B cell (primary cell): ENCODE measurements at regions of chr16 and their contacts with region 1.

Region 1: DNA sequence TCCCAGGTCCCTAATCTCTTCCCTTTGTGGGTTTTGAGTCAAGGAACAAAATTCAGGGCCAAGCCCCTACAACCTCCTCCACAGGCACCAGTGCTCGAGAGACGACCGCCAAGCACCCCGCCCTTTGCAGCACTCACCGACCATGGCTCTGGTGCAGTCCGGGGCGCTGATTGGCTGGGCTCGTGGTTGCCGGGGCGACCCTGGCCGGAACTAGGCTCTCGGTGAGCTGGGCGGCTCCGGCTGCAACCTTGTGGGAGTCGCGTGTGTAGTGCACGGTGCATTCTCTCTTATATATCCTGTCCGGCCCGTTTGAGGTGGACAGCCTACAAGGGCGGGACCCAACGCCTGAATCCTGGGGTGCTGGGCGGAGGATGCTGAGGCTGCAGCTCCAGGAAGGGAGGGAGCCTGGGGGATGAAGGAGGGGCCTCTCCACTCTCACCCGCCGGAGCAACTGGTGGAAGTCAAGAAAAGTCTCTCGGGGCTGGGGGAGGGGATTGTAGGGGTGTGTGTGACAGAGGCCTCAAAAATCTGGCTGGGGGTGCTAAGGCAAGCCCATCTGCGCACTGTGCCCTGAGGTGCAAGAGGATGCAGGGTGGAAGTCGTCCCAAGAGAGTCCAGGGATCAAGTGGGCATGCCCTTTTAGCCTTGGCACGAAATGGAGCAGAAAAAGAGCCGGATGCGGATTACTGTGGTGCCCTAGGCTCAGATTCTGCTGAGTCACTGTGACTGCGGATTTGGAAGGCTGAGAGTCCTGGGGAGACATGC is at the start of gene NQO1:
- DNase-seq: peak; percentile 86
- ATAC-seq: peak; percentile 99
- H3K4me3 ChIP-seq: peak within 1 kb of the TSS; percentile 59 to 68 (median 60)
- H3K4me3 Mint-ChIP-seq: peak within 1 kb of the TSS; percentile 99
- H3K27ac ChIP-seq: peak within 1 kb of the TSS; percentile 47 to 66
- H3K27ac Mint-ChIP-seq: peak within 1 kb of the TSS; percentile 96
- H3K4me1 ChIP-seq: peaks cover 11 to 15% of the 10 kb centered on the region in 2 donors
- H3K4me1 Mint-ChIP-seq: peaks cover 17% of the 10 kb centered on the region
- H3K27me3 ChIP-seq: no peaks in the 10 kb centered on the region
- H3K27me3 Mint-ChIP-seq: no peaks in the 10 kb centered on the region
- CTCF ChIP-seq: no peak
- total RNA-seq, gene NQO1: 1.1 and 2.3 TPM in 2 replicates

Region 2: DNA sequence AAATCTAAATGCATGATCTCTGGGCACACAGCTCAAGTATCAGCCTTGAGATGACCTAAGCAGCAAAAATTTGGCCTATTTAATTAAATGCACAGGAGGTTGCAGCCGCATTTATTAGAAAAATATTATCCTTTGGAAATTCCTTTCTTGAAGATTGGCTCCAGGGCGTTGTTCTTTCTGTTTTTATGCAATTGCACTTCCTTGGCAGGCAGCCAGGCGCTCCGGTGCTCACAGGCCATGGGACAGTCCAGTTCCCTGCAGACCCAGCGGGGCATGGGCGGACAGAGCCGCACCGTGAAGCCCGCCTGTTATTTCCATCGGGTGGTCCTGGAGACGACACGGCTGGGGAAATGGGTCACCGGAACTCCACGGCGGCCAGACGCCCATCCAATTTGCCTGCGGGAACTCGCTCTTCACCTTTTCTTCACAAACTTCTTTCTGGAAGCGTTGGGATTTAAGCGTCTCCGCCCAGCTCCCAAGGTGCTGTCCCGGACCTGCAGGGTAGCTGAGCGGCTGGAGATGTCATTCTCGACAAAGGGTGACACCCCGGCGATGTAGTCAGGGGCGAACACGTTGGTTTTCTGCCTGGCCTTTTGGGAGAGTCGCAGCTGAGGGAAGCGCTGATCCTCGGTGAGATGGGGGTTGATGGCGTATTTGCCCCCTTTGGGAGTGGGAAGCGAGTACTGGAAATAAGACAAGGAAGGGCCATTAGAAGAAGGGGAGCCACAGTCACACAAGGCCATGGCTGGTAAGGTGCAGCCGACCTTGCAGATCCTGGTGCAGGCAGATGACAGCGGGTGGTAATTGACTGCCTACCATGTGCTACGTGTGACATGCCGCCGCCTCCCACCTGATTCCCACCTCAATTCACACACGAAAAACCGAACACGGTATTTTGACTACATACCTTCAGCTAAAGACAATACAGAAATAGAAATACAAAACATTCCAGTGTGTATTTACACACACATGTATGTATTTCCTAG is 15.7 kb after region 1 on chr16:
- CTCF ChIA-PET with region 1: no interaction called
- POLR2A ChIA-PET with region 1: no interaction called
- intact Hi-C with region 1: no loop called
- DNase-seq: no peak
- ATAC-seq: no peak
- H3K4me3 ChIP-seq: no peak overlapping the region
- H3K4me3 Mint-ChIP-seq: no peak overlapping the region
- H3K27ac ChIP-seq: no peak overlapping the region
- H3K27ac Mint-ChIP-seq: no peak overlapping the region
- H3K4me1 ChIP-seq: no peaks in the 10 kb centered on the region
- H3K4me1 Mint-ChIP-seq: no peaks in the 10 kb centered on the region
- H3K27me3 ChIP-seq: no peaks in the 10 kb centered on the region
- H3K27me3 Mint-ChIP-seq: no peaks in the 10 kb centered on the region
- CTCF ChIP-seq: no peak

Region 3: DNA sequence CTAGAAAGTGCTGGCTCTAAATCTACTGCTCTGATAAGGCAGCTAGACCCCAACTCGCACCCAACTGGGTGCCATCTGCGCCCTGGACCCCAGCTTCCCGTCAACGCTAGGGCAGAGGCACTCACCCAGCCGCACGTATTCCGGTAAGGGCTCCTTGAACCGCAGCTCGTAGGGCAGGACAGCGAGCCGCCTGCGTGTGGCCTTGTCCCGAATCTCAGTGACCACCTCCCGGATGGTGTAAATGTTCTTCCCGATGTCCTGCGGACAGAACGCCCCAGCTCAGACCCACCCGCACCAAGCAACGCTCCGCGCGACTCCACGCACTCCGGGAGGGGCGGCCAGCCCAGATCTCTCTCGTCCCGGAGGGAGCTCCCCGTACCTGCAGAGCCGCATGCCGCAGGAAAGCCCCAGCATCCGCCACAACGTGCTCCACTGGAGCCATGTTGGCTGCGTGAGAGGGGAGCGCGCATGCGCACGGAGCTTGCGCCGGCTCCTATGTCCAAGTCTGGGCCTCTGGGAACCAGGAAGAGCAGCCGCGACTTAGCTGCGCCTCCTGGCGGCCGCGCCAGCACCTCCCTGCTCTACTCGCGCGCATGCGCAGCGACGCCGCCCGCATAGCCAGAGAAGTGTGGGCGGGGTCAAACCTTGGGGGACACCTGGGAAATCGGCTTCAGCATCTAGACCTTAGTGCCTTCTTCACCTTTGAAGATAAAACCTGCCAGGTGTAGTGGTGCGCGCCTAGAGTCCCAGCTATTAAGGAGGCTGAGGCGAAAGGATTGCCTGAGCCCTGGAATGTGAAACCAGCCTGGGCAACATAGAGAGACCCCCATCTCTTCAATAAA is 28.2 kb after region 1 on chr16 and contains the start of gene NOB1:
- CTCF ChIA-PET with region 1: interaction called, 10 read pairs
- POLR2A ChIA-PET with region 1: interaction called, 3 read pairs
- intact Hi-C with region 1: loop called (anchors 1 kb)
- DNase-seq: peak; percentile 99
- ATAC-seq: peak; percentile 96
- H3K4me3 ChIP-seq: peak within 1 kb of the TSS; percentile 73 to 100 (median 91)
- H3K4me3 Mint-ChIP-seq: peak within 1 kb of the TSS; percentile 99
- H3K27ac ChIP-seq: peak within 1 kb of the TSS; percentile 61 to 76
- H3K27ac Mint-ChIP-seq: peak within 1 kb of the TSS; percentile 94
- H3K4me1 ChIP-seq: peaks cover 8 to 20% of the 10 kb centered on the region in 2 donors
- H3K4me1 Mint-ChIP-seq: peaks cover 21% of the 10 kb centered on the region
- H3K27me3 ChIP-seq: no peaks in the 10 kb centered on the region
- H3K27me3 Mint-ChIP-seq: no peaks in the 10 kb centered on the region
- CTCF ChIP-seq: peak; percentile 92
- total RNA-seq, gene NOB1: 44.9 and 49.6 TPM in 2 replicates

Region 4: DNA sequence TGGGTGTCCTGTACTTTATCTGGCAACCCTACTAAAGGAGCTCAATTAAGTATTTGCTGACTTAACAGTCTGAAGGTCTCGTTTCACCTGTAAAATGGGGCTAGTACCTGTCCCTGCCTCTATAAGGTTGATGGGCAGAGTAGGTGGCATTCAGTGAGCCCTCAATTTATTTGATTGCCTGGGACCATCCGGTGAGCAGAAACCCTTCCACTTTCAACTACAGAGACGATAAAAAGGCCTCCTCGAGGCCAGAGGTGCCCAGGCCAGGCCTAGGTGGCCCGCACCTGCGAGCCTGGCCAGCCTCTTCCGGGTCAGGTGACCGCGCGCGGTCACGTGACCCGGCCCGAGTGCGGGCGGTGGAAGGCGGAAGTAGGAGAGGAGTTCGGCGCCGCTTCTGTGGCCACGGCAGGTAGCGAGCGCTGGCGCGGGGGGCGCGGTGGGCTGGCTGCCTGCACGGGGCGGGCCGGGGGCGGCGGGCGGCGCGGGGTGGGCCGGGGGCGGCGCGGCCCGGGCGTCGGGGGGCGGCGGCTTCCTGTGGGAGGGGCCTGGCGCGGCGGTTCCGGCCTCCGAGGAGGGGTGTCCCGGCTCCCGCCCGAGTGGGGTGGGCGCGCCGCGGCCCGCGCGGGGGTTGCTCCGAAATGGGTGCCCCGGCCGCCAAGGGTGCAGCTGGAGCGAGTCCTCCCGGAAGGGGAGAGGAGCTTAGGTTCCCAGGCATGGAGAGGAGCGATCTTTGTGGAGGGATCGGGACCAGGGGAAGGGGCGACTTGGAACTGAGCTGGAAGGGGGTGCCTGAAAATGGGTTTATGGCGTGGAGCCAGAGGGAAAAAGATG is 35.7 kb after region 1 on chr16 and contains the start of gene WWP2:
- CTCF ChIA-PET with region 1: no interaction called
- POLR2A ChIA-PET with region 1: interaction called, 6 read pairs
- intact Hi-C with region 1: loop called (anchors 1 kb)
- DNase-seq: peak; percentile 92
- ATAC-seq: peak; percentile 82
- H3K4me3 ChIP-seq: peak within 1 kb of the TSS; percentile 87 to 95 (median 92)
- H3K4me3 Mint-ChIP-seq: peak within 1 kb of the TSS; percentile 90
- H3K27ac ChIP-seq: peak within 1 kb of the TSS; percentile 92 to 98
- H3K27ac Mint-ChIP-seq: peak within 1 kb of the TSS; percentile 97
- H3K4me1 ChIP-seq: peaks cover 14 to 23% of the 10 kb centered on the region in 2 donors
- H3K4me1 Mint-ChIP-seq: peaks cover 30% of the 10 kb centered on the region
- H3K27me3 ChIP-seq: no peaks in the 10 kb centered on the region
- H3K27me3 Mint-ChIP-seq: no peaks in the 10 kb centered on the region
- CTCF ChIP-seq: no peak
- total RNA-seq, gene WWP2: 100 and 105 TPM in 2 replicates